ENCODE measurements at regions of chr15 and their contacts with region 1.

Region 1: DNA sequence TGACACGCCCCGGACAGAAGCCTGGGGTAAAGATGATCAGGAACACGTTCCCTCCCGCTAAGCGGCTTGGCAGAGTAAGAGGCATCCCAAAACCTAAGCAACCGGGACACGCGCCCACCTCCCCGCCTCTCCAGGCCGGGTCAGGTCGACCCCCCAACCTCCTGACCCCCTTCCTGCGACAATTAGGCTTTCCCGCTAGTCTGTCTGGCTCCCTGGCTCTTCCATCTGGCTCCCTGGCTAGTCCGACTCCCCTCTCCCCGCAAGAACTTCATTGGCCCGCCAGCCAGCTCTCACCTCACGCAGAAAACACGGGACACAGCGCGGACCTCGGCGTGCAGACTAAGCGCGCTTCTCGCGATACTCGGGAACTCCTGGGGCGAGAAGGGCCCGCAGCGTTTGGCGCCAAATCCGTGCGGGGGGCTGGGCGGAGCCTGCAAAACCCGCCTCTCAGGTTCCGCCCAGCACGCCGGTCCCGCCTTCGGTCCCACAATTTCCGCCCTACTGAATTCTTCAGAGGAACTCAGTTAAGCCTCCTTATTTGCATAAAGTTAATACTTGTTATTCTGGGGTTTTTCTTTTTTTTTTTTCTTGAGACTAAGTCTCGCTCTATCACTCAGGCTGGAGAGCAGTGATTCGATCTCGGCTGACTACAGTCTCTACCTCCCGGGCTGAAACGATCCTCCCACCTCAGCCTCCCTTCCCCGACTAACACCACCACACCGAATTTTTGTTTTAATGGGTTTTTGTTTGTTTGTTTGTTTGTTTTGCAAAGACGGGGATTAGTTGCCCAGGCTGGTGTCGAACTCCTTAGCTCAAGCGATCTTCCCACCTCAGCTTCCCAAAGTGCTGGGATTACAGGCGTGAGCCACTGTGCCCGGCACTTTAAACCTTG is at the start of gene TIPIN:
- DNase-seq: peak; percentile 99
- H3K4me3 Mint-ChIP-seq: peak within 1 kb of the TSS; percentile 96
- H3K27ac Mint-ChIP-seq: peak within 1 kb of the TSS; percentile 95
- H3K4me1 Mint-ChIP-seq: peaks cover 37% of the 10 kb centered on the region
- H3K27me3 Mint-ChIP-seq: no peaks in the 10 kb centered on the region
- total RNA-seq, gene TIPIN: 33.8 to 34.7 TPM

Region 2: DNA sequence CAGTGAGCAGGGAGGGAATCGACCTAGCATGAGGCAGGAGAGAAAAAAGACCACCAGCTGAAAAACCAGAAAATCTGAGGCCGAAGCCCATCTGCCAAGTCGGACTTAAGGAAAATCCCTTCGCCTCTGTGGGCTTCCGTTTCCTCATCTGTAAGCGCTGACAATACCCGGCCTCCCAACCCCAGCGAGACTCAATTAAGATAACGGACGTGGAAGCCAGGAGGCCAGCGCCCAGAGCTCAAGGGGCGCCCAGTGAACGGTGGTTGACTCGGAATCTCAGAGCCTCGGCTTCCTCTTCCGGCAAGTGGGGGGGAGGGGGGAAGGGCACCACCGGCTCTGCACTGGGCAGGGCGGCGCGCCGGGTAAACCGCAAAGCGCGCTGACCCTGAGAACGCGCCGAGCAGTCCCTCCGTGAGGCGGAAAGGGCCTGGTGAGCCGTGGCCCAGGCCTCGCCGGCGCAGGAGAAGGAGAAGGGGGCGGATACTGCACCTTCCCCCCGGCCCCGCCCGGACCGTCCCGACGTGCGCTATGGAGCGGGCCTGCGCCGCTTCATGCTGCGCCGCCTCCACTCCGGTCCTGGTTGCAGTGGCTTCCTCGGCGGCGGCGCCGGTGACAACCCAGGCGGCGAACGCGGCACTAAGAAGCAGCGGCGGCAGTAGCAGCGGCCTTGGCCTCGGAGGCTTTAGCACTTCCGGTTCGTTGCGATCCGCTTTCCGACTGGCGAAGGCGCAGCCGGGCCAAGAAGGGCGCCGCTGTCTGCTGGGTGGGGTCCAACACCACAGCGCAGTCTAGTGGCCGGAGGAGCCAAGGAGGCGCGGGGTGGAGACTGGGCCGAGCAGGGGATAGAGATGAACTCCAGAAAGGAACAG is 839.4 kb before region 1 on chr15 and contains the start of gene DPP8:
- CTCF ChIA-PET with region 1: no interaction called
- intact Hi-C with region 1: loop called (anchors 1 kb)
- DNase-seq: peak; percentile 96
- H3K4me3 Mint-ChIP-seq: peak within 1 kb of the TSS; percentile 95
- H3K27ac Mint-ChIP-seq: peak within 1 kb of the TSS; percentile 88
- H3K4me1 Mint-ChIP-seq: peaks cover 35% of the 10 kb centered on the region
- H3K27me3 Mint-ChIP-seq: no peaks in the 10 kb centered on the region
- total RNA-seq, gene DPP8: 23.0 to 24.9 TPM

Region 3: GRCh38 chr15:66131200-66131599 is 225.4 kb before region 1 on chr15:
- CTCF ChIA-PET with region 1: no interaction called
- intact Hi-C with region 1: no loop called
- DNase-seq: no peak
- H3K4me3 Mint-ChIP-seq: no peak overlapping the region
- H3K27ac Mint-ChIP-seq: no peak overlapping the region
- H3K4me1 Mint-ChIP-seq: peaks cover 11% of the 10 kb centered on the region
- H3K27me3 Mint-ChIP-seq: no peaks in the 10 kb centered on the region

Region 4: DNA sequence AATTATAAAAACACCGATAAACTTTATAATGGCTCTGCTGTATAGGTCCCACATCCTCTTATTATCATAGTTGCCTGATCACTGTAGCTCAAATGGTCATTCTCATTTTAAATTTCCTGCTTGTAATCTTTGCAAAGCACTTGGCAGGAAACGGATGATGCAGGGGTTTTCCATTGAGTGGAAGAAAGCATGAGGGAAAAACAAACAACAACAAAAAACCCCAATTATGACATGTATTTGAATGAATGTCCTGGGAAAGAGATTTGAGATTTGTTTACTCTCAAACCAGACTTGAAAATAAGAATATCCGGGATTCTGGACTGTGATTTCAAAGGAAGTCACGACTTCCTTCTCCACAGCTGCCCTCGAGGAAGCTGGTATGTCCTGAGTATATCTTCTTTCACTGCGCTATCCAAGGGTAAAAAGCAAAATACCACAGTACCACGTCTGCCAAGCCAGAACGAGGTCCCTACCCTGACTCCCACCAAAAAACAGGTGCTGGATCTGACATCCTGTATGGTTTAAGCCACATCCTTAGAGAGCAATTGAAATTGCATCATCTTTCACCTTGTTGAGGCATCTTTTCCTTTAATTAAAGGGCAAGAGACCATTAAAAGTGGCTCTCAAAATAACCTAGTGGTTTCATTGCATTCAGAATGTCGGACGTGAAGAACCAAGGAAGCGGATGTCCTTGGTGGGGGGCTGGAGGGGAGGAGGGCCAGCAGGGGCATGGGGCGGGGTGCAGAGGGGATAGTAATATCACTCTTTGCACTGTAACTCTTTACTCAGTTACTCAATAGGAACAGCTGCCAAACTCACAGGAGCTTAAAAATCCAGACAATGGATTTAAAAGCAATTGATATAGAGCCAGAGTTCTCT is 13.4 kb after region 1 on chr15:
- CTCF ChIA-PET with region 1: no interaction called
- intact Hi-C with region 1: loop called (anchors 1 kb)
- DNase-seq: peak; percentile 66
- H3K4me3 Mint-ChIP-seq: peak overlapping the region; percentile 66
- H3K27ac Mint-ChIP-seq: peak overlapping the region; percentile 92
- H3K4me1 Mint-ChIP-seq: peaks cover 16% of the 10 kb centered on the region
- H3K27me3 Mint-ChIP-seq: no peaks in the 10 kb centered on the region

Region 5: DNA sequence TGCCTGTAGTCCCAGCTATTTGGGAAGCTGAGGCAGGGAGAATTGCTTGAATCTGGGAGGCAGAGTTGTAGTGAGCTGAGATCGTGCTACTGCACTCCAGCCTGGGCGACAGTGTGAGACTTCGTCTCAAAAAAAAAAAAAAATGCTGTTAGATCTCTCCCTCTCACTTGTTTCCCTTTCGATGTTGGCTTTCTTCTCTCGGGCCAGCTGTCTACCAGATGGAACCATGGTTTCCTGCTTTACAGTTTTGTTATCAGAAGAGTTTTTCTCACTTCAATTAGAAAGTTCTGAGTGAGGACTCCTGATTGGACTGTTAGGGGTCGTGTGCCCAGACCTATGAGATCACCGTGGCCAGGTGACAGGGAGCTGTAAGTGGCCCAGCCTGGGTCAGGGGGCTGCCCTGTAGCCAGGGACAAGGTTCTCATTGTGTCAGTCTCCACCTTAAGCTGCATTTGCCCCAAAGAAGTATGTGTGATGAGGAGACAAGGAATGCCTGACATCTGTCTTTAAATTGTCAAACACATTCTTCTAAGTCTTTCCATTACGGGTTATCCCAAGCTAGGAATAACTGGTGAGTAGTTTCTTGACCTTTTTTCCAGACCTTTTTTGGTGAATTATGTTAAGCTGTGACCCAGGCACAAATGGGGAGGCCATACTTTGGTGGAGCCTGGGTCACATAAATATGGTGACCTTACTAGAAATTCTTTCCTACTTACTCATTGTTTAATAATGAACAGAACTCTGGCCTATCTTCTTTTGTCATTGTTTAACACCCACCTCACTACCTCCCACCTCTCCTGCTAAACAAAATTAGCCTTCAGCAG is 115.8 kb after region 1 on chr15:
- CTCF ChIA-PET with region 1: interaction called, 3 read pairs
- intact Hi-C with region 1: loop called (anchors 1 kb)
- DNase-seq: peak; percentile 82
- H3K4me3 Mint-ChIP-seq: peak overlapping the region; percentile 66
- H3K27ac Mint-ChIP-seq: peak overlapping the region; percentile 80
- H3K4me1 Mint-ChIP-seq: peaks cover 62% of the 10 kb centered on the region
- H3K27me3 Mint-ChIP-seq: no peaks in the 10 kb centered on the region

Region 6: GRCh38 chr15:66504563-66505429 is 148.2 kb after region 1 on chr15 and contains the starts of genes RPL4 and ZWILCH:
- CTCF ChIA-PET with region 1: interaction called, 3 read pairs
- intact Hi-C with region 1: loop called (anchors 1 kb)
- DNase-seq: peak; percentile 77
- H3K4me3 Mint-ChIP-seq: peak within 1 kb of the TSS; percentile 99
- H3K27ac Mint-ChIP-seq: peak within 1 kb of the TSS; percentile 98
- H3K4me1 Mint-ChIP-seq: peaks cover 50% of the 10 kb centered on the region
- H3K27me3 Mint-ChIP-seq: no peaks in the 10 kb centered on the region
- total RNA-seq, gene RPL4: 6,298 to 6,391 TPM
- total RNA-seq, gene ZWILCH: 21.6 to 23.3 TPM

Measured in activated naive CD4-positive, alpha-beta T cell treated with anti-CD3 and anti-CD28 coated beads for 36 hours (primary cell).